Mucosa of descending colon (tissue), 3 donors: ENCODE measurements at regions of chr1 and their contacts with region 1.

Region 1: GRCh38 chr1:16078925-16079656 is 5.6 kb upstream of the FAM131C start:
- DNase-seq: peak; percentile 76 to 91 (median 86)
- ATAC-seq: peak; percentile 74
- H3K4me3 ChIP-seq: no peak overlapping the region
- H3K4me1 ChIP-seq: peaks cover 14% of the 10 kb centered on the region
- CTCF ChIP-seq: peak; percentile 69

Region 2: GRCh38 chr1:16187748-16188401 is 108.8 kb after region 1 on chr1:
- intact Hi-C with region 1: loop called (anchors 2 kb)
- DNase-seq: peak; percentile 77 to 88 (median 84)
- ATAC-seq: peak; percentile 79
- H3K4me3 ChIP-seq: no peak overlapping the region
- H3K4me1 ChIP-seq: peaks cover 24% of the 10 kb centered on the region
- CTCF ChIP-seq: peak; percentile 87

Region 3: DNA sequence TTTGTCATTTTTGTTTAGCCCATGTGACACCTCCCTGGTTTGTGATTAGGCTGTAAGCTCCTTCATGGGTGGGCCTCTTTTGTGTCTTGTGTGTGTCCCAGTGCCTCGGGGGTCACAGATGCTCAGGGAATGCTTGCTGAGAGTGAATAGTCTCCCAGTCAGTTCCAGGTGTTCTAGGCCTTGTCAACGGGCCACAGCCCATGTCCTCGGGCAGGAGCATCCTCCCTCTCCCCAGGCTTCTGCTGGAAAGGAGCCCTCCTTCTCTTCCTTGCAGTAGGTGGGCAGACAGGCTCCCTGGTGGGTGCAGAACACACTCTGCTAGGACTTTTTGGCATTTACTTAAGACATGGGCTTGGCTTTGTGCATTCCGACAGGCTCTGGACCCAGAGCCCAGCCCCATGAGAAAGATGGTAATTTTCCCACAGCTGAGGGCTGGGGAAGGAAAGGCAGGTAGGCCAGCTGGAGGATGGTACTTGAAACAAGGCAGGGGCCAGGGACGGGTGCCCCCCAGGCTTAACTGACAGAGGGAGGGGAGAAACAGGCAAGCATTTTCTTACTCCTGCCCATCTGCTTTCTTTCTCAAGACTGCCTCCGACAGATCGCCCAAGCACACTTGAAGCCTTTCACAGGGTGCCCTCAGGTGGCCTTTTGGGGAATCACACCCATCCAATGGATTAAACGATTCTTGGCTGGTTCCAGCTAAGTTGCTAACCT is 165.0 kb after region 1 on chr1:
- intact Hi-C with region 1: loop called in 1 of 2 experiments (anchors 10 kb)
- DNase-seq: peak in 2 of 3 donors; percentile 79 to 89
- ATAC-seq: peak; percentile 79
- H3K4me3 ChIP-seq: no peak overlapping the region
- H3K4me1 ChIP-seq: peaks cover 18% of the 10 kb centered on the region
- CTCF ChIP-seq: peak; percentile 85

Region 4: GRCh38 chr1:16354619-16355018 is 275.5 kb after region 1 on chr1:
- intact Hi-C with region 1: loop called in 1 of 2 experiments (anchors 5 kb)
- DNase-seq: no peak
- ATAC-seq: no peak
- H3K4me3 ChIP-seq: no peak overlapping the region
- H3K4me1 ChIP-seq: peaks cover 11% of the 10 kb centered on the region
- CTCF ChIP-seq: no peak